PC-9 (cell line): ENCODE measurements at regions of chr1 and their contacts with region 1.

Region 1: DNA sequence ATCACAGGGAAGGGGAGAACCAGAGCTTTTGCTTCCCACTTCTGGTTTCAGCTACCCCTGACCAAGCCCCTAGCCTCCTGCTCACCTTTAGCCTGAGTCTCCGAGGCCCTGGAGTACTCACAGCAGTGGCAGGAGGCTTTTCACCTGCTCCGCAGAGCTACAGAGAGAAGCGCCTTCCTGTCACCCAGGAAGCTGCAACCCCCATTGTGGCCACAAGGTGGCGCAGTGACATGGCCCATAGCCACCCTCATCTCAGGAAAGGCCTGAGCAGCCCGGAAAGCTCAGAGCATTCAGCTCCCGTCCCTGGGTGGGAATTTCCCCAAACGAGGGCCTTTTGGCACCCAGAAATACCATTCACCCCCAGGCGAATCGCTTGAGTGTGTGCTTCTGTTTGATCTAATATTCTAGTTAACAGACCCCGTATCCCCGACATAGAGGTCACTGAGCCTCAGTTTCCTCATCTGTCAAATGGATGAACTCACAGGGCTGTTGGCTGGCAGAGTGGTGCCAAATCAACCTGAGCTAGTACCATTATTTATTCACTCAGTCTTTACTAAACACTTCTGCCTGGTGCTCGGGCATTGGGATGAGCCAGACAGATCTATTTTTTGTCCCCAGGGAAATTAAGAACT is 25.3 kb downstream of the A3GALT2 start:
- DNase-seq: peak; percentile 61 to 82
- H3K4me3 ChIP-seq: no peak overlapping the region
- H3K27ac ChIP-seq: no peak overlapping the region
- H3K4me1 ChIP-seq: no peaks in the 10 kb centered on the region
- H3K27me3 ChIP-seq: no peaks in the 10 kb centered on the region
- CTCF ChIP-seq: peak; percentile 97

Region 2: GRCh38 chr1:33111970-33112369 is 183.6 kb before region 1 on chr1:
- CTCF ChIA-PET with region 1: interaction called, 3 read pairs
- POLR2A ChIA-PET with region 1: no interaction called
- intact Hi-C with region 1: loop called (anchors 1 kb)
- DNase-seq: no peak
- H3K4me3 ChIP-seq: no peak overlapping the region
- H3K27ac ChIP-seq: no peak overlapping the region
- H3K4me1 ChIP-seq: no peaks in the 10 kb centered on the region
- H3K27me3 ChIP-seq: no peaks in the 10 kb centered on the region
- CTCF ChIP-seq: peak; percentile 69

Region 3: GRCh38 chr1:33244143-33244820 is 51.3 kb before region 1 on chr1:
- CTCF ChIA-PET with region 1: no interaction called
- POLR2A ChIA-PET with region 1: no interaction called
- intact Hi-C with region 1: no loop called
- DNase-seq: peak; percentile 57 to 90
- H3K4me3 ChIP-seq: no peak overlapping the region
- H3K27ac ChIP-seq: peak overlapping the region; percentile 62
- H3K4me1 ChIP-seq: peaks cover 31% of the 10 kb centered on the region
- H3K27me3 ChIP-seq: no peaks in the 10 kb centered on the region
- CTCF ChIP-seq: no peak

Region 4: DNA sequence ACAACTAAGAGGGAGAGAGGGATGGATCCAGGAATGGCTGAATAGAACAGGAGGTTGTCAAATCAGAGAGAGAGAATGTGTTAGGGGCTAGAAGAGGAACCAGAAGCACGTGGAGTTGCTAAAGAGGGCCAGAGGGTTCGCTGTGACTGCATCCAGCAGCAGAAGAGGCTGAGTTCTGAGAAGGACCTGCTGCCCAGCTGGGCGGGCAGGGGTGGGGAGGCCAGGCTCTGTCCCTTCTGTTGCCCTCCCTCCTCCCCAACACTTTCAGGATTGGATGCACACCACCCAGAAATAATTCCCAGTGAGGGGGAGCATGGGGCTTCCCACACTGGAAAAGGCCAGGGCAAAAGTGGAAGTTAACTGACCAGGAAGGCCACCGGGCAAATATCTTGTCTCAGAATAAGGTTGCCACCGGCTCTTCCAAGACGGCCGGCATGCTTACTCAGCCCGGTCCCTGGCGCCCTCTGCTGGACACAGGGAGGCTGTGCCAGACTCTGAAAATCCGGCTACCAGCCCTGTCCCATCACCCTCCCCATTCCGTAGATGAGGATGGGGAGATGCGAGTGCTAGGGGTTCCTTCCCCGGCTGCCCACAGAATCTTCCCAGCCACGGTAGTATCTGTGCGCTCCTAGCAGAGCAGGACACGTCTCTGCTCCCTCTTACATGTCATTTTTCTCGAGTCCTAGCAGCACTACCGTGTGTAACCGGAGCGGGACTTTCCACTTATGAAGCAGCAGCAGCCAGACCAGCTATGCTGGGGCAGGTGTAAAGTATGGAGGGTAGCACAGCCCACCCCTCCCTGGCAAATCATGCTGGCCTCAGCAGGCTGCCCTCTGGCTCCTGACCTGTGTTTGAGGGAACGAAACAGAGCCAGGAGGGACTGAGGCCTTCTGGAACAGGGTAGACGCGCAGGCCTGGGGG is 72.2 kb after region 1 on chr1:
- CTCF ChIA-PET with region 1: no interaction called
- POLR2A ChIA-PET with region 1: no interaction called
- intact Hi-C with region 1: loop called (anchors 1 kb)
- DNase-seq: peak; percentile 48 to 80
- H3K4me3 ChIP-seq: no peak overlapping the region
- H3K27ac ChIP-seq: no peak overlapping the region
- H3K4me1 ChIP-seq: no peaks in the 10 kb centered on the region; the same call in 1 of the 2 replicates
- H3K27me3 ChIP-seq: no peaks in the 10 kb centered on the region
- CTCF ChIP-seq: peak; percentile 94

Region 5: DNA sequence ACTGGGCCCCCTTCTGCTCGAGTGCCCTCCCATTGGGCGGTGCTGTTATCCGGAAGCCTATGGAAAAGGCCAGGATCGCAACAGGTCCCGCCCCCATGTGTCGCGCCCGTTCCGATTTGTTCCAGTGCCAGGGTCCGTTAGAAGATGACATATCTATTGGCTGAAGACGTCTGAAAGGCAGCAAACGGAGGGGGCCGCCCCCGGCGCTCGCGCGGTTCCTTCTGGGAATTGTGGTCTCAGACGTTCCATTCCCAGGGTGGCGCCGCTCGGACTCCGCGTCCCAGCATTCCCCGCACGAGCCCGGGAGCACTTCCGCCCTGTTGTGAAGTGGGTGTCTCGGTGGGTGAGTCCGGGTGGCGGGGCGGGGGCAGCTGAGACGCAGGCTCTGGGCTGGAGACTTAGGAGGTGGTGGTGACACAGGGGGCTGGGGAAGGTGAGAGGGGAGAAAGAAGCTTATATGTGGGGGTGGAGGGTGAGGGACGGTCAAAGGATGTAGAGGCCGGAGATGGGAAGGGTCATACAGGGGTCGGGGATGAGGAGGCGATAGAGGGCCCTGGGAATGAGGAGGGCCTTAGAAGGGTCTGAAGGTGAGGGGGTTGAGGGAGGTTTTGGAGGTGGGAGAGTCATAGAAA is 176.9 kb after region 1 on chr1 and contains the start of gene ZSCAN20:
- CTCF ChIA-PET with region 1: interaction called, 6 read pairs
- POLR2A ChIA-PET with region 1: no interaction called
- intact Hi-C with region 1: loop called (anchors 1 kb)
- DNase-seq: peak; percentile 92 to 96
- H3K4me3 ChIP-seq: peak within 1 kb of the TSS; percentile 66
- H3K27ac ChIP-seq: no peak within 1 kb of the TSS
- H3K4me1 ChIP-seq: peaks cover 10% of the 10 kb centered on the region
- H3K27me3 ChIP-seq: no peaks in the 10 kb centered on the region
- CTCF ChIP-seq: no peak
- total RNA-seq, gene ZSCAN20: 6.0 and 6.4 TPM in 2 replicates

Region 6: DNA sequence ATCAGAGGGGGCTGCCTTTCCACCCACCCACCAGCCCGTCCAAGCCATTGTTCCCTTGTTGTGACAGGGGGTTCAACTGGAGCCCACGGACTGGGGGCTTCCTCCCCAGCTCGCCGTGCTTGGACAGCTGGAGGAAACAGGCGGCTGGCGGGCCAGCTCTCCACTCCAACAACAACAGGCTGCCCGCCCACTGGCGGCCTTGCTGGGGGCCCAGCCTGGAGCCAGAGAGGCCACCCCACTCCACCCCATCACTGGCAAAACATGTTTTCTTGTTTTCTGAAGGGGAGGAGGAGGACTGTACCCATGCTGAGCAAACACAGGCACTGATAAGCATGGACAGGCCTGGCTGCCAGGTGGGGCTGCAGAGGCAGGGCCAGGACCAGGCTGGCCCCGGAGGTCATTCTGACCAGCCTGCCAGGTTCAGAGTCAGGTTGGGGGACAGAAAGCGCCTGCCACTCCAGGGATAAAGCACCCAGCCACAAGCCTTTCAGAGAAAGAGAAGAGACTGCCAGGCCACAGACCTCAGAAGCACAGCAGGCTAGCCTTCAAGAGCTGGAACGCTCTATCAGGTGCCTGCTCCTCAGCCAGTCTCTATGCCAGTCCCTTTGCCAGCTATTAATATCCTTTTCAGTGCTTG is 1530.0 kb after region 1 on chr1:
- CTCF ChIA-PET with region 1: interaction called, 10 read pairs
- POLR2A ChIA-PET with region 1: no interaction called
- intact Hi-C with region 1: no loop called
- DNase-seq: peak in 1 of 2 experiments; percentile 26
- H3K4me3 ChIP-seq: no peak overlapping the region
- H3K27ac ChIP-seq: no peak overlapping the region
- H3K4me1 ChIP-seq: no peaks in the 10 kb centered on the region
- H3K27me3 ChIP-seq: no peaks in the 10 kb centered on the region
- CTCF ChIP-seq: no peak